ENCODE measurements at regions of chr9 and their contacts with region 1.

Region 1: GRCh38 chr9:72648324-72649126 is 127.1 kb downstream of the TMC1 start:
- DNase-seq: no peak

Region 2: GRCh38 chr9:72586388-72587130 is 62.0 kb before region 1 on chr9:
- intact Hi-C with region 1: loop called (anchors 10 kb)
- DNase-seq: no peak